ENCODE measurements at regions of chr10 and their contacts with region 1.

Region 1: GRCh38 chr10:93376372-93377293 is 105.5 kb downstream of the MYOF start:
- DNase-seq: peak; percentile 75
- H3K4me3 ChIP-seq: no peak overlapping the region
- H3K27ac ChIP-seq: peak overlapping the region; percentile 62
- H3K4me1 ChIP-seq: no peaks in the 10 kb centered on the region
- H3K27me3 ChIP-seq: no peaks in the 10 kb centered on the region
- CTCF ChIP-seq: peak; percentile 90

Region 2: GRCh38 chr10:93028883-93029282 is 347.8 kb before region 1 on chr10:
- intact Hi-C with region 1: no loop called
- DNase-seq: no peak
- H3K4me3 ChIP-seq: no peak overlapping the region
- H3K27ac ChIP-seq: no peak overlapping the region
- H3K4me1 ChIP-seq: no peaks in the 10 kb centered on the region
- H3K27me3 ChIP-seq: no peaks in the 10 kb centered on the region
- CTCF ChIP-seq: no peak

Region 3: DNA sequence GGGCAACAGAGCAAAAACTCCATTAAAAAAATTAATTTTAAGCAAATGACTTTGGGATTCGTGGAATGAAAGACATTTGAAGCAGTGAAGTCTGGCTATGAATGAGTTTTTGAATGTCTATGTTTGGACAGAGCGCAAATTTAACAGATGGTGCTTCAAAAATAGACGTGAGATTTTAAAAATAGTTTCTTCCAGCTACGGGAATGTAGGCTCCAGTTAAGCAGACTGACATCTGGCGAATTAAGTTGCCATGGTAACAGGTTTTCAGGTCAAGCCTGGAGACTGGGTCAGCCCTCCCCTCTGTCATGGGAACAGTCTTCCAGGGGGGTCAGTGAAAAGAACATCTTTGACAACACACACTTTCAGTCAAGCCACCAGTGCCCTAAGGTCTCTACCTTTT is 43.5 kb after region 1 on chr10:
- intact Hi-C with region 1: loop called (anchors 5 kb)
- DNase-seq: no peak
- H3K4me3 ChIP-seq: no peak overlapping the region
- H3K27ac ChIP-seq: no peak overlapping the region
- H3K4me1 ChIP-seq: peaks cover 8% of the 10 kb centered on the region
- H3K27me3 ChIP-seq: no peaks in the 10 kb centered on the region
- CTCF ChIP-seq: no peak

Region 4: GRCh38 chr10:93482145-93482834 is 105.7 kb after region 1 on chr10 and contains the start of gene MYOF:
- intact Hi-C with region 1: loop called (anchors 1 kb)
- DNase-seq: peak; percentile 80
- H3K4me3 ChIP-seq: peak within 1 kb of the TSS; percentile 47
- H3K27ac ChIP-seq: peak within 1 kb of the TSS; percentile 87
- H3K4me1 ChIP-seq: peaks cover 5% of the 10 kb centered on the region
- H3K27me3 ChIP-seq: no peaks in the 10 kb centered on the region
- CTCF ChIP-seq: peak; percentile 52
- total RNA-seq, gene MYOF: 88.1 to 90.9 TPM